Aorta (tissue), 5 donors: ENCODE measurements at regions of chr14 and their contacts with region 1.

Region 1: DNA sequence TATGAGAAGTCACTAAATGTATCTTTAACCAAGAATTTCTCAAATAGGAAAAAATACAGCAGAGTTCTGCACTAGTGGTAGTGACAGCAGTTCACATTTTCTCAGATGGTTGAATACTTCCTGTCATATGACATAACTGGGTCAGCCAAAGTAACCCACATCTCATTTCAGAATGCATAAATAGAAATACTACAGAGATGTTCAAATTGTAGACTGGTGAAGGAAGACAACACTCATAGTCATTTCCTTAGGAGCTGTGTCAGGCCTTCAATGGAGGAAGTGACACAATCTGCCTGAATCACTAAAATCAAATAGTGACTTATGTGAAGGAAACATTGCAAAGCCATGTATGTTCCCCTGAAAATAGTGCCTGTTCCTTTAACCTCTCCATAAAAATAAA is 32.4 kb downstream of the FERMT2 start:
- DNase-seq: no peak
- ATAC-seq: peak; percentile 61
- H3K4me3 ChIP-seq: no peak overlapping the region
- H3K27ac ChIP-seq: peak overlapping the region in 1 of 2 donors; percentile 28
- H3K4me1 ChIP-seq: peaks cover 9 to 21% of the 10 kb centered on the region in 2 donors
- H3K27me3 ChIP-seq: no peaks in the 10 kb centered on the region

Region 2: GRCh38 chr14:52876311-52876710 is 42.2 kb before region 1 on chr14:
- intact Hi-C with region 1: loop called in 1 of 2 experiments (anchors 5 kb)
- DNase-seq: no peak
- ATAC-seq: no peak
- H3K4me3 ChIP-seq: no peak overlapping the region
- H3K27ac ChIP-seq: peak overlapping the region in 1 of 2 donors; percentile 57
- H3K4me1 ChIP-seq: peaks cover 0 to 2% of the 10 kb centered on the region in 2 donors
- H3K27me3 ChIP-seq: no peaks in the 10 kb centered on the region

Region 3: GRCh38 chr14:53167602-53168328 is 249.3 kb after region 1 on chr14:
- intact Hi-C with region 1: no loop called
- DNase-seq: no peak
- ATAC-seq: peak; percentile 59
- H3K4me3 ChIP-seq: no peak overlapping the region
- H3K27ac ChIP-seq: no peak overlapping the region
- H3K4me1 ChIP-seq: no peaks in the 10 kb centered on the region
- H3K27me3 ChIP-seq: no peaks in the 10 kb centered on the region